Activated T-helper 2 cell treated with anti-CD3 and anti-CD28 coated beads, Interferon-gamma antibody, Interleukin-2, Interleukin-4, amounts not matched to agents 10 μg/mL and 5 μg/mL and 100 μg/mL, durations not matched to agents 14 hours and 24 hours and 36 hours (primary cell): ENCODE measurements at regions of chr9 and their contacts with region 1.

Region 1: DNA sequence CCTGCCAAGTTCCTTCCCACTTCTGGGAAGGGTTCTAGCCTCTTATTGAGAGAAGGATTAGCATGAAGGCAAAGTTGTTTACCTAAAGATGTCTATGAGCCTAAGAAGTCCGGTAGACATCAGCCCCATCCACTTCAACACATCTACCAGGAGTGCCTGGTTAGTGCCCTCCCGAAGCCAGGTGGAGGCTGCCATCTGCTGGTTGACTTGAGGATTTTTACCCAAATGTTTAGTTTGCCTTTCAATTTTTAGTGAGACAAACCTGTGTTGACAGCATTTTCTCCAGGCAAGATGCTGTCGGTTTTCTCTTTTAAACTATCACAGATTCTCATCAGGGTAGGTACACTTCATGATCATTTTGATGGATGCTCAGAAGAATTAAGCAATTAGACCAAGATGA is 83.6 kb upstream of the TNFSF8 start:
- DNase-seq: peak; percentile 67
- H3K4me3 Mint-ChIP-seq: no peak overlapping the region
- H3K27ac Mint-ChIP-seq: no peak overlapping the region
- H3K4me1 Mint-ChIP-seq: peaks cover 45% of the 10 kb centered on the region
- H3K27me3 Mint-ChIP-seq: peaks cover 12% of the 10 kb centered on the region

Region 2: GRCh38 chr9:114397848-114398605 is 616.0 kb before region 1 on chr9:
- intact Hi-C with region 1: loop called (anchors 10 kb)
- DNase-seq: peak; percentile 92
- H3K4me3 Mint-ChIP-seq: peak overlapping the region; percentile 85
- H3K27ac Mint-ChIP-seq: peak overlapping the region; percentile 73
- H3K4me1 Mint-ChIP-seq: peaks cover 31% of the 10 kb centered on the region
- H3K27me3 Mint-ChIP-seq: no peaks in the 10 kb centered on the region

Region 3: GRCh38 chr9:114662081-114662989 is 351.7 kb before region 1 on chr9:
- intact Hi-C with region 1: loop called (anchors 1 kb)
- DNase-seq: peak; percentile 55
- H3K4me3 Mint-ChIP-seq: no peak overlapping the region
- H3K27ac Mint-ChIP-seq: no peak overlapping the region
- H3K4me1 Mint-ChIP-seq: peaks cover 10% of the 10 kb centered on the region
- H3K27me3 Mint-ChIP-seq: peaks cover 15% of the 10 kb centered on the region

Region 4: GRCh38 chr9:114738581-114739316 is 275.2 kb before region 1 on chr9:
- intact Hi-C with region 1: loop called (anchors 1 kb)
- DNase-seq: peak; percentile 62
- H3K4me3 Mint-ChIP-seq: no peak overlapping the region
- H3K27ac Mint-ChIP-seq: peak overlapping the region; percentile 83
- H3K4me1 Mint-ChIP-seq: peaks cover 50% of the 10 kb centered on the region
- H3K27me3 Mint-ChIP-seq: no peaks in the 10 kb centered on the region

Region 5: DNA sequence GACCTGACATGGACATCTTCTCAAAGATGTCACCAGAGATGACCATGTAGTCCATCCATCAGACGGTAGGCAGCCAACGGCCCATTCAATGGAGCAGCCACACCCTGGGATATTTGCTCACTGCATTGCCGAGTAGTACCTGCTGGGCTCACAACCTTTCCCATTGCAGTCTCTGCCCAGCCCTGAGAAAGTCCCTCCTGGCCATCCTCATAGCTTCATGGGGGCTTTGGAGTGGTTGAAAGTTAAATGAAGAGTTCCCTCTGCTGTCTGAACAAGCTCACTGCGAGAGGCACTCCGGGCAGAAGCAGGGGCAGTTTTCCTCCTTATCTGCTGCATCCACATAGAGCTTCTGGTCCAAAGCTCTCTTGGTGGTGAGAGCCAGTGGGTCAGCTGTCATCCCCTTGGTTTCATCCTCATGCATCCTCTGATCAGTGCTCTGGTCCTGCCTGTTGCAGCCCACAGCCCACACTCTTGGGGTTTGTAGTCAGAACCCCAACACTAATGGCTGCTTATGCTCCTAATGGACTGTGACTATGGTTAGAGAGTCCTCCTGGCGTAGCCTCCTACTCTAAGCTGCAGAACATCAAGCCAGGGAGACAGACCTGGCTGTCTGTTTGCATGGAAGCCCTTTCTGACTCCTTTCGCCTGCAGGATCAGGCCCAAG is 107.0 kb before region 1 on chr9:
- intact Hi-C with region 1: loop called (anchors 1 kb)
- DNase-seq: no peak
- H3K4me3 Mint-ChIP-seq: no peak overlapping the region
- H3K27ac Mint-ChIP-seq: peak overlapping the region; percentile 94
- H3K4me1 Mint-ChIP-seq: peaks cover 84% of the 10 kb centered on the region
- H3K27me3 Mint-ChIP-seq: no peaks in the 10 kb centered on the region

Region 6: DNA sequence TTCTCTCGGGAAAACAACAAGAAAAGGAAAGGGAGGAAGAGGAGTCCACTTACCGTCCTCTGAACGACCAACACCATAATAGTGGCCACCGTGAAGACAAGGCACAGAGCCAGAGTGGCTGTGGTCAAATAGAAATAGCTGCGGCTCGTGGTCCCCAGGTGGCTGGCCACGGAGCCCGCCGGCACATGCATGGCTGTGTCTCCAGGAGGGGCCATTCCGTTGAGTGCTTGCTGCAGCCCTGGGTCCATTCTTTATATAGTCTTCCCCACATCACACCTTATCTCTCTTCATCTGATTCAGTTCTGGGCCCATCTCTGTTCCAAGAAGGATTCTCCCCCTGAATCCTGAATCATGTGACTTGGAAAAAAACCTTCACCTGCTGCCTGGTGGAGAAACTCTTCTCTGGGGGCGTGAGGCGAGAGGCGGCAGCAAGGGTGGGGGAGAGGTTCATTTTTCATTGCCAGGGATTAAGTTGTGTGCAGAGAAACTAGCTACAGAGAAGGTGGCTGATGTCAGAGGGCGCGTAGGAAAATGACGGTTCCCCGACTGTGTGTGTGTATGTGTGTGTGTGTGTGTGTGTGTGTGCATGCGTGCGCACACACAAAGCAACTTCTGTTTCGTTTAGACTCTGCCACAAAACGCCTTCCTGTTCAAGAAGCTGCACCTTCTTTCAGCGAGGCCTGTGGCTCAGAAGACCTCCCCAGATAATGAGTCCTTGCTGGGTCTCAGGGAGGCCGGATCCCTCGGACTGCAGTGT is 83.8 kb before region 1 on chr9 and contains the start of gene TNFSF8:
- intact Hi-C with region 1: loop called (anchors 1 kb)
- DNase-seq: peak; percentile 79
- H3K4me3 Mint-ChIP-seq: peak within 1 kb of the TSS; percentile 98
- H3K27ac Mint-ChIP-seq: peak within 1 kb of the TSS; percentile 98
- H3K4me1 Mint-ChIP-seq: peaks cover 47% of the 10 kb centered on the region
- H3K27me3 Mint-ChIP-seq: no peaks in the 10 kb centered on the region
- total RNA-seq, gene TNFSF8: 73.6 and 82.3 TPM in 2 replicates

Region 7: GRCh38 chr9:115050002-115050490 is 36.0 kb after region 1 on chr9:
- intact Hi-C with region 1: no loop called
- DNase-seq: no peak
- H3K4me3 Mint-ChIP-seq: no peak overlapping the region
- H3K27ac Mint-ChIP-seq: no peak overlapping the region
- H3K4me1 Mint-ChIP-seq: no peaks in the 10 kb centered on the region
- H3K27me3 Mint-ChIP-seq: peaks cover 54% of the 10 kb centered on the region